CD4-positive, alpha-beta memory T cell (primary cell): ENCODE measurements at regions of chr7 and their contacts with region 1.

Region 1: GRCh38 chr7:148575640-148576411 is 14.7 kb upstream of the C7orf33 start:
- DNase-seq: peak; percentile 48 to 67 (median 57)
- H3K4me3 ChIP-seq: no peak overlapping the region
- H3K4me3 Mint-ChIP-seq: no peak overlapping the region
- H3K27ac ChIP-seq: no peak overlapping the region
- H3K27ac Mint-ChIP-seq: no peak overlapping the region
- H3K4me1 ChIP-seq: no peaks in the 10 kb centered on the region
- H3K4me1 Mint-ChIP-seq: peaks cover 0 to 2% (median 0%) of the 10 kb centered on the region in 4 donors
- H3K27me3 ChIP-seq: no peaks in the 10 kb centered on the region
- H3K27me3 Mint-ChIP-seq: peaks cover 0 to 4% of the 10 kb centered on the region in 2 donors

Region 2: GRCh38 chr7:148255333-148255732 is 320.5 kb before region 1 on chr7:
- CTCF ChIA-PET with region 1: no interaction called
- POLR2A ChIA-PET with region 1: no interaction called
- intact Hi-C with region 1: no loop called
- DNase-seq: no peak
- H3K4me3 ChIP-seq: no peak overlapping the region
- H3K4me3 Mint-ChIP-seq: no peak overlapping the region
- H3K27ac ChIP-seq: no peak overlapping the region
- H3K27ac Mint-ChIP-seq: no peak overlapping the region
- H3K4me1 ChIP-seq: no peaks in the 10 kb centered on the region
- H3K4me1 Mint-ChIP-seq: no peaks in the 10 kb centered on the region
- H3K27me3 ChIP-seq: no peaks in the 10 kb centered on the region
- H3K27me3 Mint-ChIP-seq: peaks cover 9 to 13% of the 10 kb centered on the region in 2 donors

Region 3: GRCh38 chr7:148503875-148504487 is 71.8 kb before region 1 on chr7:
- CTCF ChIA-PET with region 1: interaction called, 3 read pairs
- POLR2A ChIA-PET with region 1: no interaction called
- intact Hi-C with region 1: loop called (anchors 10 kb)
- DNase-seq: peak in 4 of 5 donors; percentile 35 to 52 (median 44)
- H3K4me3 ChIP-seq: no peak overlapping the region
- H3K4me3 Mint-ChIP-seq: no peak overlapping the region
- H3K27ac ChIP-seq: no peak overlapping the region
- H3K27ac Mint-ChIP-seq: no peak overlapping the region
- H3K4me1 ChIP-seq: peaks cover 4% of the 10 kb centered on the region
- H3K4me1 Mint-ChIP-seq: peaks cover 7 to 16% (median 9%) of the 10 kb centered on the region in 4 donors
- H3K27me3 ChIP-seq: no peaks in the 10 kb centered on the region
- H3K27me3 Mint-ChIP-seq: peaks cover 17 to 23% of the 10 kb centered on the region in 2 donors

Region 4: GRCh38 chr7:148563583-148564274 is 12.1 kb before region 1 on chr7:
- CTCF ChIA-PET with region 1: interaction called, 28 read pairs
- POLR2A ChIA-PET with region 1: no interaction called
- intact Hi-C with region 1: no loop called
- DNase-seq: no peak
- H3K4me3 ChIP-seq: peak overlapping the region in 1 of 2 donors; percentile 9
- H3K4me3 Mint-ChIP-seq: peak overlapping the region in 7 of 8 donors; percentile 33 to 85 (median 77)
- H3K27ac ChIP-seq: no peak overlapping the region
- H3K27ac Mint-ChIP-seq: peak overlapping the region; percentile 31 to 81 (median 54)
- H3K4me1 ChIP-seq: peaks cover 15% of the 10 kb centered on the region
- H3K4me1 Mint-ChIP-seq: peaks cover 10 to 20% (median 13%) of the 10 kb centered on the region in 4 donors
- H3K27me3 ChIP-seq: no peaks in the 10 kb centered on the region
- H3K27me3 Mint-ChIP-seq: peaks cover 7 to 8% of the 10 kb centered on the region in 2 donors

Region 5: DNA sequence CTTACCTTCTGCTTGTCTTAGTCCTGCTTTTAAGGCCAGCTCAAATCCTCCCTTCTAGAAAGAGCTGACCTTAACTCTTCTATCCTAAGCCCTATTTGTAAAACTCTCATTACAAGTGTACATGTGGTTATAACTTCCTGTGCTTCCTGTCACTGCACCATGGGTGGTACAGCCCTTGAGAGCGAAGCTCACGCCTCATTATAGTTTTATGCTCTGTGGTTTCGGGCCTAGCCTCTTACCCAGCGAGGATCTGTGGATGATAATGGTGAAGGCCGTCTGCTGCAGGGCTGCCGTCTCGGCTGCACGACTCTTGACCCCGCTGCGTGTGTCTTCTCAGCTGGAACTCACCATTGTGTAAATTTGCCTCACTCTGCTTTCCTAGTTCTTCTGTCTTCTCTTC is 197.5 kb after region 1 on chr7:
- CTCF ChIA-PET with region 1: interaction called, 15 read pairs
- POLR2A ChIA-PET with region 1: no interaction called
- intact Hi-C with region 1: loop called (anchors 1 kb)
- DNase-seq: peak; percentile 38 to 57 (median 43)
- H3K4me3 ChIP-seq: no peak overlapping the region
- H3K4me3 Mint-ChIP-seq: peak overlapping the region in 7 of 8 donors; percentile 15 to 77 (median 67)
- H3K27ac ChIP-seq: peak overlapping the region; percentile 52
- H3K27ac Mint-ChIP-seq: peak overlapping the region; percentile 55 to 88 (median 77)
- H3K4me1 ChIP-seq: peaks cover 24% of the 10 kb centered on the region
- H3K4me1 Mint-ChIP-seq: peaks cover 25 to 46% (median 33%) of the 10 kb centered on the region in 4 donors
- H3K27me3 ChIP-seq: no peaks in the 10 kb centered on the region
- H3K27me3 Mint-ChIP-seq: no peaks in the 10 kb centered on the region

Region 6: GRCh38 chr7:148856891-148857290 is 281.1 kb after region 1 on chr7:
- CTCF ChIA-PET with region 1: interaction called, 15 read pairs
- POLR2A ChIA-PET with region 1: no interaction called
- intact Hi-C with region 1: loop called (anchors 1 kb)
- DNase-seq: no peak
- H3K4me3 ChIP-seq: no peak overlapping the region
- H3K4me3 Mint-ChIP-seq: no peak overlapping the region
- H3K27ac ChIP-seq: no peak overlapping the region
- H3K27ac Mint-ChIP-seq: no peak overlapping the region
- H3K4me1 ChIP-seq: peaks cover 20% of the 10 kb centered on the region
- H3K4me1 Mint-ChIP-seq: peaks cover 11 to 21% (median 16%) of the 10 kb centered on the region in 4 donors
- H3K27me3 ChIP-seq: no peaks in the 10 kb centered on the region
- H3K27me3 Mint-ChIP-seq: no peaks in the 10 kb centered on the region